PC-9 (cell line): ENCODE measurements at regions of chr6 and their contacts with region 1.

Region 1: DNA sequence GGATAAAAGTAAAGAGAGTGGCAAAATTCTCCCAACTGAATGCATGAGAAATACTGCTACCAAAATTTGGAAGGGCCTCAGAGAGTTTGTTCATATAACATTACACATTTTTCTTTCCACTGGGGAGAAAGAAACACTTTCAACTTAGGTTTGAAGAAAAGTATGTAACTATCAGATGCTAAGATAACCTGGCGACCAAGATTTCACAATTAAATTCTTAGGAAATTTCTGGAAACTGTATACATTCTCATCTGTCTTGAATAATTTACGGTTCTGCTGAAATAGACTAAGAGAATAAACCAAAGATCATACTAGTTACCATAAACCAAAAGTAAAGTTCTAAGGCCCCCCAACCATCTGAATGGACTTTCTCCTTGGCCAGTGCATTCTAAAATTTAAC is 413.0 kb upstream of the RUNX2 start:
- DNase-seq: no peak
- H3K4me3 ChIP-seq: no peak overlapping the region
- H3K27ac ChIP-seq: no peak overlapping the region
- H3K4me1 ChIP-seq: no peaks in the 10 kb centered on the region
- H3K27me3 ChIP-seq: no peaks in the 10 kb centered on the region
- CTCF ChIP-seq: no peak

Region 2: DNA sequence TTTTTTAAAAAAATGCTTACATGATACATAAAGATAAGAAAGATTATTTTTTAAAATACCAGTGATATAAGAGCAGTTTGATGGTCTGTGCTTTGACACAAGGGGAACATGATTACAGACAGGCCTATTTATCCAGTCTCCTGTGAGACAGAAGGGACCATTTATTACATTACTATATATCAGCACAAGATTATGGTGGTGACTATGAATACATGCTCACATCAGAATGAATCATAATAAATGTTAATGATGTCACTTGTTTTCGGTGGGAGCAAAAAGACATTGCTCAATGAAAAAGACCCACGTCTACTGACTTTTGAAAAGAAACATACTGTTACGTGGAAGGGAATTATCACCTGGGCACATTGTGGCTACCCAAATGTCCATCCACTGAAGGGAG is 72.5 kb before region 1 on chr6:
- CTCF ChIA-PET with region 1: no interaction called
- POLR2A ChIA-PET with region 1: no interaction called
- intact Hi-C with region 1: no loop called
- DNase-seq: no peak
- H3K4me3 ChIP-seq: no peak overlapping the region
- H3K27ac ChIP-seq: no peak overlapping the region
- H3K4me1 ChIP-seq: no peaks in the 10 kb centered on the region
- H3K27me3 ChIP-seq: no peaks in the 10 kb centered on the region
- CTCF ChIP-seq: no peak

Region 3: GRCh38 chr6:45118754-45119153 is 203.6 kb after region 1 on chr6:
- CTCF ChIA-PET with region 1: no interaction called
- POLR2A ChIA-PET with region 1: interaction called, 13 read pairs
- intact Hi-C with region 1: no loop called
- DNase-seq: no peak
- H3K4me3 ChIP-seq: no peak overlapping the region
- H3K27ac ChIP-seq: no peak overlapping the region
- H3K4me1 ChIP-seq: no peaks in the 10 kb centered on the region
- H3K27me3 ChIP-seq: no peaks in the 10 kb centered on the region
- CTCF ChIP-seq: no peak